ENCODE measurements at regions of chr11 and their contacts with region 1.

Region 1: GRCh38 chr11:47980245-47981049 is at the start of gene PTPRJ:
- DNase-seq: no peak
- H3K4me3 Mint-ChIP-seq: peak within 1 kb of the TSS; percentile 54
- H3K27ac Mint-ChIP-seq: no peak within 1 kb of the TSS
- H3K4me1 Mint-ChIP-seq: no peaks in the 10 kb centered on the region
- H3K27me3 Mint-ChIP-seq: peaks cover 12% of the 10 kb centered on the region
- CTCF ChIP-seq: no peak
- total RNA-seq, gene PTPRJ: 0.30 and 0.61 TPM in 2 replicates

Region 2: GRCh38 chr11:47616726-47617416 is 363.6 kb before region 1 on chr11:
- CTCF ChIA-PET with region 1: no interaction called
- POLR2A ChIA-PET with region 1: no interaction called
- intact Hi-C with region 1: no loop called
- DNase-seq: peak; percentile 61
- H3K4me3 Mint-ChIP-seq: no peak overlapping the region
- H3K27ac Mint-ChIP-seq: no peak overlapping the region
- H3K4me1 Mint-ChIP-seq: no peaks in the 10 kb centered on the region
- H3K27me3 Mint-ChIP-seq: no peaks in the 10 kb centered on the region
- CTCF ChIP-seq: peak; percentile 34

Region 3: DNA sequence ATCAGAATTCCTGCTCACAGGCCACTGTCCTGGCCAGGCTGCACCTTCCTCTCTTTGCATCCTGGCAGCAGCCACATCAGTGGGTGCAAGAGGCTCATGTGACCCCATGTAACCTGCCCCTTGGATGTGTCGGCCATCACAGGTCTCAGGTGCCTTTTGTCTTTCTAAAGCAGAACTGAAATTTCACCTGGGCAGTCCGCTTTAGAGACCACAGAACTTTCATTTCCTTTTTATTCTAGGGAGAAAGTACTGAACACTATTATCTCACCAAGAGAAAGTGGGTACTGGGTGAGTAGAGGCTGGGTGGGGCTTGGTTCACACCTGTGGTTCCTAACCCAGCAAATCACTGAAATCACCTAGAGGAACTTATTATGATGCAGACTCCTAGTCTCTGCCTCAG is 80.6 kb before region 1 on chr11:
- CTCF ChIA-PET with region 1: no interaction called
- POLR2A ChIA-PET with region 1: no interaction called
- intact Hi-C with region 1: no loop called
- DNase-seq: no peak
- H3K4me3 Mint-ChIP-seq: no peak overlapping the region
- H3K27ac Mint-ChIP-seq: no peak overlapping the region
- H3K4me1 Mint-ChIP-seq: no peaks in the 10 kb centered on the region
- H3K27me3 Mint-ChIP-seq: no peaks in the 10 kb centered on the region
- CTCF ChIP-seq: no peak

Region 4: GRCh38 chr11:47946682-47947575 is 33.5 kb before region 1 on chr11:
- CTCF ChIA-PET with region 1: no interaction called
- POLR2A ChIA-PET with region 1: interaction called, 3 read pairs
- intact Hi-C with region 1: loop called (anchors 5 kb)
- DNase-seq: peak; percentile 99
- H3K4me3 Mint-ChIP-seq: no peak overlapping the region
- H3K27ac Mint-ChIP-seq: no peak overlapping the region
- H3K4me1 Mint-ChIP-seq: peaks cover 18% of the 10 kb centered on the region
- H3K27me3 Mint-ChIP-seq: no peaks in the 10 kb centered on the region
- CTCF ChIP-seq: no peak

Region 5: GRCh38 chr11:48043111-48043990 is 62.9 kb after region 1 on chr11:
- CTCF ChIA-PET with region 1: interaction called, 3 read pairs
- POLR2A ChIA-PET with region 1: no interaction called
- intact Hi-C with region 1: loop called (anchors 10 kb)
- DNase-seq: no peak
- H3K4me3 Mint-ChIP-seq: no peak overlapping the region
- H3K27ac Mint-ChIP-seq: no peak overlapping the region
- H3K4me1 Mint-ChIP-seq: peaks cover 6% of the 10 kb centered on the region
- H3K27me3 Mint-ChIP-seq: no peaks in the 10 kb centered on the region
- CTCF ChIP-seq: no peak